ENCODE measurements at regions of chr11 and their contacts with region 1.

Region 1: DNA sequence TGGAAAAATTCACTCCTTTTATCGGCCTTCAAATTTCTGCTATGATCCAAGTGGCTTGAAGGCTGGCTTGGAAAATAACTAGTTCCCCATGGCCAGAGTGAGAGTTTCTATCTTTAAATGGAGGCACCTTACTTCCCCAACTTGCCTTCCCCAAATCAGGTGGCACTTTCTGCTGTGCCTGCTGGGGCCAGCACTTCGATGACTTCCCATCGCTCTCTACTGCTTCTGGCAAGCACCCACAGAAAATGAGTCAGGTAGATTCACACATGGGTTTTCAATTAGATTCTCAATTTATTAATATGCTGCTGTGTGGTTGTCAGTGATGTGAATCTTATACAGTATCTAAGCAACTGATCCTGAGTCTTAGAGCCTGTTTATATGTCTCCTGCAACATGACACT is 398.8 kb upstream of the RAG2 start:
- DNase-seq: no peak
- H3K4me3 ChIP-seq: no peak overlapping the region
- H3K27ac ChIP-seq: no peak overlapping the region
- H3K4me1 ChIP-seq: peaks cover 4% of the 10 kb centered on the region
- H3K27me3 ChIP-seq: no peaks in the 10 kb centered on the region
- CTCF ChIP-seq: no peak

Region 2: GRCh38 chr11:37199082-37199481 is 202.3 kb after region 1 on chr11:
- CTCF ChIA-PET with region 1: no interaction called
- POLR2A ChIA-PET with region 1: no interaction called
- intact Hi-C with region 1: no loop called
- DNase-seq: no peak
- H3K4me3 ChIP-seq: no peak overlapping the region
- H3K27ac ChIP-seq: no peak overlapping the region
- H3K4me1 ChIP-seq: peaks cover 6% of the 10 kb centered on the region
- H3K27me3 ChIP-seq: no peaks in the 10 kb centered on the region
- CTCF ChIP-seq: no peak

Region 3: GRCh38 chr11:37527545-37527944 is 530.8 kb after region 1 on chr11:
- CTCF ChIA-PET with region 1: no interaction called
- POLR2A ChIA-PET with region 1: interaction called, 12 read pairs
- intact Hi-C with region 1: no loop called
- DNase-seq: no peak
- H3K4me3 ChIP-seq: no peak overlapping the region
- H3K27ac ChIP-seq: no peak overlapping the region
- H3K4me1 ChIP-seq: peaks cover 6% of the 10 kb centered on the region
- H3K27me3 ChIP-seq: no peaks in the 10 kb centered on the region
- CTCF ChIP-seq: no peak

Measured in A673 (cell line).